GM12878 (cell line): ENCODE measurements at regions of chr2 and their contacts with region 1.

Region 1: GRCh38 chr2:230418341-230419016 is 2.5 kb downstream of the SP100 start:
- DNase-seq: no peak
- ATAC-seq: peak; percentile 20; the same call in 2 of the 3 replicates
- H3K4me3 ChIP-seq: peak overlapping the region; percentile 94
- H3K27ac ChIP-seq: peak overlapping the region; percentile 95
- H3K4me1 ChIP-seq: peaks cover 24% of the 10 kb centered on the region
- H3K27me3 ChIP-seq: no peaks in the 10 kb centered on the region
- CTCF ChIP-seq: no peak
- EP300 ChIP-seq: no peak
- POLR2A ChIP-seq: no peak
- RAD21 ChIP-seq: no peak

Region 2: DNA sequence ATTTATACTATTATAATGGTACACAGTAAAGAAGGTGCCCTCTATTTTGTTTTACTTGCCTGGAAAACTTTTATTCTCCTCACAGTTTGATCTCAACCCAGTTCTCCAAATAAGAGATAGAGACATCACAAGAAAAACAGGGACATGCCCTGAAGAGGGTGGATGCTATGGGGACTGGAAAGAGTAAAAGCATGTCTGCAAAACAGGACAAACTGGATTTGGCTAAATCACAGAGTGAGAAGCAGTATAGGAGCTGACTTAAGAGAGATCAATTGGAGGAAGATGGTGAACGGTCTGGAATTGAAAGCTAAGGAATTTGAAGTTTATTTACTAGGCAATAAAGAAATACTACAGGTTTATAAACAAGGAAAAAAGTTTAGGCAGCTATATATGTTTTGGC is 58.5 kb before region 1 on chr2:
- CTCF ChIA-PET with region 1: no interaction called
- POLR2A ChIA-PET with region 1: no interaction called
- RAD21 ChIA-PET with region 1: no interaction called
- SMC1A ChIA-PET with region 1: no interaction called
- in situ Hi-C with region 1: no loop called
- intact Hi-C with region 1: no loop called
- DNase-seq: no peak
- ATAC-seq: no peak
- H3K4me3 ChIP-seq: no peak overlapping the region
- H3K27ac ChIP-seq: no peak overlapping the region
- H3K4me1 ChIP-seq: peaks cover 4% of the 10 kb centered on the region; the same call in 1 of the 2 replicates
- H3K27me3 ChIP-seq: no peaks in the 10 kb centered on the region
- CTCF ChIP-seq: no peak
- EP300 ChIP-seq: no peak
- POLR2A ChIP-seq: no peak
- RAD21 ChIP-seq: no peak

Region 3: GRCh38 chr2:230403746-230404145 is 14.7 kb before region 1 on chr2:
- CTCF ChIA-PET with region 1: no interaction called
- POLR2A ChIA-PET with region 1: no interaction called
- RAD21 ChIA-PET with region 1: no interaction called
- SMC1A ChIA-PET with region 1: no interaction called
- in situ Hi-C with region 1: no loop called
- intact Hi-C with region 1: no loop called
- DNase-seq: no peak
- ATAC-seq: no peak
- H3K4me3 ChIP-seq: no peak overlapping the region
- H3K27ac ChIP-seq: no peak overlapping the region
- H3K4me1 ChIP-seq: no peaks in the 10 kb centered on the region
- H3K27me3 ChIP-seq: no peaks in the 10 kb centered on the region
- CTCF ChIP-seq: no peak
- EP300 ChIP-seq: no peak
- POLR2A ChIP-seq: no peak
- RAD21 ChIP-seq: no peak

Region 4: GRCh38 chr2:230441227-230441897 is 22.9 kb after region 1 on chr2:
- CTCF ChIA-PET with region 1: no interaction called
- POLR2A ChIA-PET with region 1: interaction called, 21 read pairs
- RAD21 ChIA-PET with region 1: interaction called, 22 read pairs
- SMC1A ChIA-PET with region 1: interaction called, 45 read pairs
- in situ Hi-C with region 1: no loop called
- intact Hi-C with region 1: loop called (anchors 2 kb)
- DNase-seq: peak; percentile 35
- ATAC-seq: peak; percentile 84
- H3K4me3 ChIP-seq: no peak overlapping the region
- H3K27ac ChIP-seq: peak overlapping the region; percentile 10
- H3K4me1 ChIP-seq: peaks cover 45% of the 10 kb centered on the region
- H3K27me3 ChIP-seq: no peaks in the 10 kb centered on the region
- CTCF ChIP-seq: no peak
- EP300 ChIP-seq: no peak
- POLR2A ChIP-seq: no peak
- RAD21 ChIP-seq: no peak

Region 5: DNA sequence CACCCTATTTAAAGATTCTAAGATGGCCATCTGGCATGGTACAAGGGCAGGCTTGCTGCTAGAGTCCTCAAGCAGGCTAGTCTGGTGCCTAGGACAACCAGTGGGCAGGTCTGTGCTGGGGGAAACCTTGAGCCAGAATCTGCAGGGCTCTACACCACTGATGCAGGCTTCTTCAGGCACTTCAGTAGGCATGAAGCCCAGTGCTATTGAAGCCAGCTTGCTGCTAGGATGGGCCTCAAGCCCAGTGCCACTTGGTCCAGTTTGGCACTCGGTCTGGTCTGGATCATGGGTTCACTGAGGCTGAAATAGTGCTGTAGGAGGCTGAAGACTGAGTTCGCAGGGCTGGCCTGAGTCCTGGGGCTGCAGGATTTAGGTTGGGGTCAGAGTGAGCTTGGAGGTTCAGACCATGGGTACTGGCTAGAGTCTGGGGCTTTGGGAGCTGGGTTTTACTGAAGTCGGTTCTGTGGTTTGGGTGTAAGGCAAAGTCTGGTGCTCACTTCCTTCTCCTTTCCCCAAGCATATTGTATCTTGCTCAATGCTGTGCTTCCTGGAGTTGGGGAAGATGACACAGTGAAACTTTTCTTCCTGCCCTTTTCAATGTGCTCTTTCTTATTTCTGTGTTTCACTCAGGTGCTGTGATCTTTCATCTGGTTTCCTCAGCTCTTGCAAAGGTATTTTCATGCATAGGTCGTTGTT is 38.7 kb after region 1 on chr2:
- CTCF ChIA-PET with region 1: no interaction called
- POLR2A ChIA-PET with region 1: no interaction called
- RAD21 ChIA-PET with region 1: interaction called, 3 read pairs
- SMC1A ChIA-PET with region 1: interaction called, 10 read pairs
- in situ Hi-C with region 1: no loop called
- intact Hi-C with region 1: no loop called
- DNase-seq: no peak
- ATAC-seq: peak; percentile 37
- H3K4me3 ChIP-seq: no peak overlapping the region
- H3K27ac ChIP-seq: peak overlapping the region; percentile 49
- H3K4me1 ChIP-seq: peaks cover 18% of the 10 kb centered on the region
- H3K27me3 ChIP-seq: no peaks in the 10 kb centered on the region
- CTCF ChIP-seq: no peak
- EP300 ChIP-seq: no peak
- POLR2A ChIP-seq: peak; percentile 44
- RAD21 ChIP-seq: no peak